ENCODE measurements at regions of chr6 and their contacts with region 1.

Region 1: DNA sequence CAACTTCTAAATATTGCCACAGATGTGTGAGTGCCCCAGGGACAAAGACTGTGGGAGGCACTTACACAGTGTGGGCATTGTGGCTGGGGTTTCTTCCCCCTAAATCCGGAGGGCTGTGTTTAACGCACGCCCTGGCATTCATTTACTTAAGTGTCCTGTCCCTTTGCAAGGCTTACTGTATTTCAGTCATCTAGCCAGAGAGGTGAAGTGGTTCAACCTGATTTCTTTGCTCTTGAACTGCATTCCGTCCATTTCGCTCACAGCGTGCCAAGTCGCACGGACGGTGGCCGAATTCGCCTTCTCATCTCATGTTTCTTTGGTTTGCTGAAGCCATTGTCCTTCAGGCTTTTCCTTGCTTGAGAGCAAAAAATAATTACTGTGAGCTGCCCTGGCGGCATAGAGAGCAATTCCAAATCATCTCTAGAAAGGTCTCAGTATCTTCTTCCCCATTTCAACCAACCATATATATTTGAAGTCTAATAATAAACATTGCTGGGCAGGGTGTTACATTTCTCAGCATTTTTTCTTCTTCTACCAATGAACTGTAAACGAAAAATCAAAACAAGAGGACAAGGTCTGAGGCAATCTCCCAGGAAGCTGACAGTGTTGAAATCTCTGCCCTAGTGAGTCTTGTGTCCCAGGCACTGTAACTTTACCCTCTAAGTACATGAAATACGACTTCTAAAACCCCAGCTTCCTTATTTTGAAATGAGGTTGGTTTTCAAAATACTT is 16.9 kb downstream of the SYTL3 start:
- H3K4me3 Mint-ChIP-seq: peak overlapping the region; percentile 27
- H3K27ac Mint-ChIP-seq: peak overlapping the region; percentile 94
- H3K4me1 Mint-ChIP-seq: peaks cover 58% of the 10 kb centered on the region
- H3K27me3 Mint-ChIP-seq: no peaks in the 10 kb centered on the region

Region 2: GRCh38 chr6:158644231-158645063 is 22.3 kb before region 1 on chr6 and contains the start of gene DYNLT1:
- intact Hi-C with region 1: loop called (anchors 1 kb)
- H3K4me3 Mint-ChIP-seq: peak within 1 kb of the TSS; percentile 93
- H3K27ac Mint-ChIP-seq: peak within 1 kb of the TSS; percentile 93
- H3K4me1 Mint-ChIP-seq: peaks cover 50% of the 10 kb centered on the region
- H3K27me3 Mint-ChIP-seq: no peaks in the 10 kb centered on the region

Measured in dendritic cell treated with granulocyte-macrophage colony-stimulating factor and Interleukin-4, amounts not matched to agents 40 ng/mL and 50 ng/mL, for 4 days (primary cell).